ENCODE measurements at regions of chr19 and their contacts with region 1.

Region 1: DNA sequence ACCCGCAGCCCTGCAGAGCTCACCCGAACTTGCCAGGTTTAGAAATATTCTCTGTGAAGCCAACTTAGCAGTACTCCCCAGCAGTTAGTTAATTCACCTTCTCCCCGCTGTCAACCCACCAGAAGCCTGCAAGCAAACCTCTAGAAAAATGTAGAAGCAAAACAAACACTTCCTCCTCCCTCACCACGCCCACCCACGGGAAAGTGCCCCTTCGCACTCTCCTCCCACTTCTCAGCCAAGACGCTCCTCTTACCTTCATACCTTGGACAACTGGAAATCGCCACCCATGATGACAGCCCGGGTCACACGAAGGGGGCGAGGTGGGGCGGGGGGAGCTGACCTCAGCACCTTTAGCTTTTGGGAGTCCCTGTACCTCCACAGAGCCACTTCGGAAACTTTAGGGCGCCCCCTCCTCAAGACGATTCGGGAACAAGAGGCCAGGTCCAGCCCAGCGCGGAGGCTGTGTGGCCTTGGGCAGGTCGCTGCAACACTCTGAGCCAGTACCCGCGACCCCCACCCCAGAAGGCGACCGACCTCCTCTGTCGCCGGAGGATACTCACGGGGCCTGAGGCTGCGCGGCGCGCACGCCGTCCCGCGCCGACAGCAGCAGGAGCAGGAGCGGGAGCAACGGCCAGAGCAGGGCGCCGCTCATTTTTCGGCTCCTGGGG is 485 bp downstream of the CPAMD8 start:
- DNase-seq: no peak
- H3K4me3 ChIP-seq: peak overlapping the region; percentile 25 to 63 (median 53)
- H3K27ac ChIP-seq: peak overlapping the region in 1 of 2 donors; percentile 65
- H3K4me1 ChIP-seq: no peaks in the 10 kb centered on the region
- H3K27me3 ChIP-seq: peaks cover 0 to 14% of the 10 kb centered on the region in 2 donors
- CTCF ChIP-seq: no peak
- POLR2A ChIP-seq: no peak

Region 2: GRCh38 chr19:17005000-17005399 is 21.1 kb before region 1 on chr19:
- intact Hi-C with region 1: no loop called
- DNase-seq: no peak
- H3K4me3 ChIP-seq: no peak overlapping the region
- H3K27ac ChIP-seq: no peak overlapping the region
- H3K4me1 ChIP-seq: no peaks in the 10 kb centered on the region
- H3K27me3 ChIP-seq: no peaks in the 10 kb centered on the region
- CTCF ChIP-seq: no peak
- POLR2A ChIP-seq: no peak

Region 3: DNA sequence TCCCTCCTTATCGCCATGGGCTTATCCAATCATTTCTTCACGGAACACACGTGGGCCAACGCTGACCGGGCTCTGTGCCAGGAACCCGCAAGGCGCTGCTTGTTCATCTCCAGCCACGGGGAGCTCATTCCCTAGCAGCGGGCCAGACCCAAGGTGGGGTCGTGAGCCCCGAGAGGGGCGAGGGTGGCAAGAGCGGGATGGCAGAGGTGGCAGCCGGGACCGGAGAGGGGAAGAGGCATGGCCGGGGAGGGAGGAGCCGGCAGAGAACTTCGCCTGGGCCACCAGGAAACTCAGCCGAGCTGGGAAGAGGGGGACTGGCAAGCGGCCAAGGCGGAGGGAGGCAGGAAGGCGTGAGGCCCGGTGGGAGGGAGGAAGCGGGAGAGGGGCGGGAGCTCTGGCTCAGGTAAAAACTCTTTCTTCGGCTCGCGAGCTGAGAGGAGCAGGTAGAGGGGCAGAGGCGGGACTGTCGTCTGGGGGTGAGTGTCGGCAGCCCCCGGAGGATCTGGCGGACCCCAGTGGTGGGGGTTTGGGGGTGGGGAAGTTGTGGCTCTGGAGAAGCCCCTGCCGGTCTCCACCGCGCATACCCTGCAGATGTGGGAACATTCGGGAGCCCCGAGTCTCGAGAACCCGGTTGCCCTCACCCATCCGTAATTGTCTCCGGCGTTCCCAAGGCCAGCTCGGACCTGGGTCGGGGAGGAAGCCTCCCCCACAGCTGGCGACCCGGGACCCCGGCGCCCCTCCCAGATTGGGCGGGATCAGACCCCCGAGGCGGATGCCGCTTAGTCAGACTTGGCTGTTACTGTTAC is 768.8 kb after region 1 on chr19 and contains the start of gene B3GNT3:
- intact Hi-C with region 1: loop called (anchors 5 kb)
- DNase-seq: peak in 1 of 2 donors; percentile 24
- H3K4me3 ChIP-seq: peak within 1 kb of the TSS; percentile 10 to 59 (median 44)
- H3K27ac ChIP-seq: peak within 1 kb of the TSS; percentile 55 to 59
- H3K4me1 ChIP-seq: no peaks in the 10 kb centered on the region
- H3K27me3 ChIP-seq: peaks cover 0 to 20% of the 10 kb centered on the region in 2 donors
- CTCF ChIP-seq: no peak
- POLR2A ChIP-seq: no peak
- total RNA-seq, gene B3GNT3: 0.32 to 6.9 (median 2.0) TPM

Measured in breast epithelium (tissue), 4 donors.